ENCODE measurements at regions of chr2 and their contacts with region 1.

Region 1: DNA sequence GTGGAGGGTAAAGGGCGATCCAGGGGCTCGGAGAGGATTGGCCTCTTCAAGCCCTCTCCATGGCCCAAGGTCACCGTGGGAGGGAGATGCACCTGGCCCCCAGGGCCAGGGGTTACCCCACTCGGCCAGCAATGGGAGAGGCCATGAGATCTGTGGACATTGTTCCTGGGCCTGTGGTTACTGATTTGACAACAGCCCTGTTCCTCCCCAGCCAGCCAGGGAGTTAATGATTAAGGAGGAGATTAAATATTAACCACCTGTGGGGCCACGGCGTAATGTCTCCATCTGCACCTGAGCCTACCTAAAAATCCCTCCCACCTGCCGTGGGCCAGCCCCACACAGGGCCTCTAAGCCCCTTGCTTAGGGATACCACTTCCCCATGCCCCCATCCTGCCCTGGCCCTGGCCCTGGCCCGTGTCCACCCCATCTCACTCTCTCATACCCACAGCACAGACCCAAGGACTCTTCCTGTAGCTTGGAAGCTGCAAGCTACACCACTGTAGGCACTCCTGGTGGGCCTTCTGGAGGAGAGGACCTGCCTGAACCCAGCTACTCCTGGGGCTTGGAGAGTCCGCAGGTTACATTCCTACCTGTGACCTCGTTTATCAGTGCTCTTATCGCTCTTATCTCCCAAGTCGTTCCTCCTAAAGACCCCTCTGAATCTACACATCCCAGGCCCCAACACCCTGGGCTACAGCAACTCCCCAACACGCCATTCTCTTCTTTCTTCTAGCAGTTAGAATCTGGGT is 32.1 kb downstream of the ZFP36L2 start:
- DNase-seq: no peak
- ATAC-seq: no peak
- H3K4me3 ChIP-seq: peak overlapping the region; percentile 80
- H3K4me3 Mint-ChIP-seq: peak overlapping the region; percentile 86 to 100 (median 92)
- H3K27ac ChIP-seq: peak overlapping the region; percentile 98
- H3K27ac Mint-ChIP-seq: peak overlapping the region; percentile 94 to 100 (median 99)
- H3K4me1 ChIP-seq: peaks cover 61 to 69% of the 10 kb centered on the region in 2 donors
- H3K4me1 Mint-ChIP-seq: peaks cover 37 to 75% (median 59%) of the 10 kb centered on the region in 7 donors
- H3K27me3 ChIP-seq: no peaks in the 10 kb centered on the region
- H3K27me3 Mint-ChIP-seq: no peaks in the 10 kb centered on the region

Region 2: GRCh38 chr2:43158259-43158880 is 35.9 kb before region 1 on chr2:
- CTCF ChIA-PET with region 1: no interaction called
- POLR2A ChIA-PET with region 1: interaction called, 8 read pairs
- intact Hi-C with region 1: loop called (anchors 1 kb)
- DNase-seq: peak in 3 of 9 donors; percentile 70 to 72 (median 71)
- ATAC-seq: peak; percentile 59
- H3K4me3 ChIP-seq: peak overlapping the region; percentile 18
- H3K4me3 Mint-ChIP-seq: peak overlapping the region; percentile 81 to 91 (median 86)
- H3K27ac ChIP-seq: peak overlapping the region; percentile 92
- H3K27ac Mint-ChIP-seq: peak overlapping the region; percentile 96 to 100 (median 99)
- H3K4me1 ChIP-seq: peaks cover 53 to 62% of the 10 kb centered on the region in 2 donors
- H3K4me1 Mint-ChIP-seq: peaks cover 47 to 95% (median 69%) of the 10 kb centered on the region in 7 donors
- H3K27me3 ChIP-seq: no peaks in the 10 kb centered on the region
- H3K27me3 Mint-ChIP-seq: no peaks in the 10 kb centered on the region

Region 3: GRCh38 chr2:43178602-43179542 is 15.4 kb before region 1 on chr2:
- CTCF ChIA-PET with region 1: interaction called, 12 read pairs
- POLR2A ChIA-PET with region 1: interaction called, 531 read pairs
- intact Hi-C with region 1: loop called (anchors 1 kb)
- DNase-seq: peak in 1 of 9 donors; percentile 30
- ATAC-seq: no peak
- H3K4me3 ChIP-seq: peak overlapping the region; percentile 17
- H3K4me3 Mint-ChIP-seq: peak overlapping the region; percentile 53 to 79 (median 71)
- H3K27ac ChIP-seq: peak overlapping the region; percentile 66
- H3K27ac Mint-ChIP-seq: peak overlapping the region; percentile 94 to 99 (median 97)
- H3K4me1 ChIP-seq: peaks cover 49 to 70% of the 10 kb centered on the region in 2 donors
- H3K4me1 Mint-ChIP-seq: peaks cover 52 to 78% (median 75%) of the 10 kb centered on the region in 7 donors
- H3K27me3 ChIP-seq: no peaks in the 10 kb centered on the region
- H3K27me3 Mint-ChIP-seq: no peaks in the 10 kb centered on the region

Region 4: DNA sequence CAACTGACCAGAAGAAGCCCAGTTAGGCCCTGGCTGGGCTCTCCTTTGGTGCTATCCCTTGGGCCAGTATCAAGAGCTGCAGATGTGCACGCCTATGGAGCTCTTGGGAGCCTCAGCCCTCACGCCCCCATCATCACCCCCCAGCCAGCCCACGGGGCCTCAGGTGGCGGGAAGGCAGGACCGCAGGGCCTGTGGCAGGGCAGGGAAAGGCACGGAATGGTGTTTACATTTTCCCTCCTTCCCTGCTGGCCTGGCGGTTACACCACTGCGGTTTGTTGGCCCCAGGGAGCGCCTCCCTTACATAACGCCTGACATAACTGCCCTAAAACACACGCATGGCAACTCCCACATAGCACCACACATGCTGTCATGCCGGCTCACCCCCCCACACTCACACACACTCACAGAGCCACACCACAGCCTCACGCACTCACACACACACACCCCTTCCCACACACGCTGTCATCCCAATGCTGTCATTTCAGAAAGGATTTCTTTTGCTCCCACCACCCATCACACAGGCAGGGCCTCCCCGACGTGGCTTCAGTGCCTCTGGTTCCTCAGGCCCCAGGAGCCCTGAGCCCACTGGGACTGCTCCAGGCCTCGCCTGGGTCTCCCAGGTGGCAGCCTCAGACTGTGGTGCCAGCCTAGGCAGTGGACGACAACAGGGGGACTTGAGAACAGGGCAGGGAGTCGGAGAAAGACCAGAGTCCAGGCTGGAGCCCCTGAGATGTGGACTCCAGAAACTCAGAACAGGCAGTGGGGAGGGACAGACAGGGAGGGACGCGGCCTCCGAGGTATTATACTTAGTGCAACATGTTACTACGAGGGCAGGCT is 16.4 kb after region 1 on chr2:
- CTCF ChIA-PET with region 1: interaction called, 5 read pairs
- POLR2A ChIA-PET with region 1: interaction called, 543 read pairs
- intact Hi-C with region 1: loop called in 1 of 2 experiments (anchors 1 kb)
- DNase-seq: peak in 7 of 9 donors; percentile 34 to 67 (median 61)
- ATAC-seq: peak; percentile 81
- H3K4me3 ChIP-seq: no peak overlapping the region
- H3K4me3 Mint-ChIP-seq: peak overlapping the region in 9 of 10 donors; percentile 7 to 81 (median 56)
- H3K27ac ChIP-seq: no peak overlapping the region
- H3K27ac Mint-ChIP-seq: peak overlapping the region; percentile 2 to 94 (median 82)
- H3K4me1 ChIP-seq: peaks cover 0 to 27% of the 10 kb centered on the region in 2 donors
- H3K4me1 Mint-ChIP-seq: peaks cover 29 to 61% (median 44%) of the 10 kb centered on the region in 7 donors
- H3K27me3 ChIP-seq: no peaks in the 10 kb centered on the region
- H3K27me3 Mint-ChIP-seq: no peaks in the 10 kb centered on the region

Measured in naive thymus-derived CD4-positive, alpha-beta T cell (primary cell).